Transverse colon (tissue), 4 donors: ENCODE measurements at regions of chr3 and their contacts with region 1.

Region 1: DNA sequence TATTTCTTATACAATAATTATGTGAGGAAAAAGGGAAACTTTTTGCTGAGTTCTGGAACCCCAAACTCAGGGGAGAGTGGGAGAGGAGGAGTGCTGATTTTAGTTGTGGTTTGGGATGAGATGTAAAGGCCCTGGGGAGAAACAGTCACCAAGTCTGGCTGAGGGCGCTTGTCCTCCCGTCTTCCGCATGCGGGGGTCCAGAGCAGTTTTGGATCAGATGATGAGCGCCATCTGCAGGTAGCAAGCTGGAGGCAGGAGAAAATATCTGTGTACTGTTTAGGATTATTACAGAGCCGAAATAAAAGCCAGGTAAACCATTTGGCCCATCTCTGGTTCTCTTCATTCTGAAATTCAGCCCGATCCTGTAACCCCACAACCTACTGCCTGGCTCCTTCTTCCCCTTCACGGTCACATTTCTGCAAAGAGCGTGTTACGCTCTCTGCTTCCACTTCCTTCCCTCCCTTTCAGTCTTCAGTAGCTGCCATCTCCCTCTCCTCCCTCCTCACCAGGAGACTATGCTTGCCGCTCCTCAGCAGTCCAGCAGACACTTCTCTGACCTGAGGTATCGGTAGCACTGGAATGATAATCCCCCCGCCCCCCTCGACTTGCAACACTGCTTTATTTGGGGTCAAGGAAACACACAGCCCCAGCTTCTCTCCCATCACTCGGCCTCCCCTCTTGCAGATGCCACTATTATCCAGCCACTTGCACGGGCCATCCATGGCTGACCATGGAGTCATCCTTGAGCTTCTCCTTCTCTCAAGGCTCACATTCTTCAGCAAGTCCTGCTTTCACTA is 1.4 kb upstream of the PARP14 start:
- DNase-seq: peak; percentile 87
- H3K4me3 ChIP-seq: peak overlapping the region in 3 of 4 donors; percentile 8 to 99 (median 22)
- H3K27ac ChIP-seq: peak overlapping the region; percentile 93 to 97 (median 94)
- H3K4me1 ChIP-seq: peaks cover 8 to 47% (median 16%) of the 10 kb centered on the region in 4 donors
- H3K27me3 ChIP-seq: no peaks in the 10 kb centered on the region
- CTCF ChIP-seq: peak; percentile 75 to 90 (median 83)
- EP300 ChIP-seq: no peak
- POLR2A ChIP-seq: no peak

Region 2: DNA sequence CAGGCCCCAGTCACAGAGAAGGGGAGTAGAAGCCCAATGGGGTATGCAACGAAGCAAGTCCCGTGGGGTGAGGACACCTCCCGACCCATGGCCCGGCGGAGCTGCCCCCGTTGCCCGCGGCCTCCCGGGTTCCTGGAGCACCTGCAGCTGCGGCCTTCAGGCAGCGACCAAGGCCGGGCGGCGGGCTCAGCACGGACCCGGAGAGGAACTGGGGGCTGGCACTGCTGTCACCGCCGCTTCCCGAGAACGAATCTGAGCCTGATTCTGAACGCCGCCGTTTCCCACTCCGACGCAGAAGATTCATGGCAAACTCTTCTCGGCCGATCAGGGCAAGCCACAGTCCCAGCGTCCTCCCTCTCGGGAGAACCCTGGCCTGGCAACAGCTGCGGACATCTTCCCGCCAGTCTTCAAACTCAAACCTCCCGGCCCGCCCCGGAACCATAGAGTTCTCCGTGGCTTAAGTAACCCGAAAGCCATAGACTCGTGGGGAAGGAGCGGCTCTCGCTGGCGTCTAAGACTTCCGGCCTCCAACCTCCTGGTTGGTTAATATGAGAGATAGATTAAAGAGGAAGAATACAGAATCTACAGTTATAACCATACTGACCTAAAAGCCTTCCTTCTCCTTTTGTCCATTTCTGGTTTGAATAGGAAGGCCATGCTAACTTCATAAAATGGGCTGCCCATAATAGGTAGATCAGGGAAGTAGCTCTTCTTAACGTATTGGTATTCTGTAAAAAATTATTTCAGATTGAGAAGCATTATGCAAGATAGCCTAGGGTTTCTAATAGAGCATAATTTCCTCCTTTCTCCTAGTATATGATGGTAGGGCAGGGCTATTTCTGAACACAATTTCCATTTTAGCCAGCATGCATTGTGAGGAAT is 1133.5 kb before region 1 on chr3 and contains the start of gene POLQ:
- in situ Hi-C with region 1: no loop called
- intact Hi-C with region 1: loop called (anchors 10 kb)
- DNase-seq: peak; percentile 92
- H3K4me3 ChIP-seq: peak within 1 kb of the TSS; percentile 28 to 68 (median 55)
- H3K27ac ChIP-seq: peak within 1 kb of the TSS; percentile 84 to 92 (median 87)
- H3K4me1 ChIP-seq: peaks cover 0 to 34% (median 17%) of the 10 kb centered on the region in 4 donors
- H3K27me3 ChIP-seq: no peaks in the 10 kb centered on the region
- CTCF ChIP-seq: no peak
- EP300 ChIP-seq: no peak
- POLR2A ChIP-seq: peak; percentile 26
- total RNA-seq, gene POLQ: under 0.01 to 25.1 (median 0.94) TPM

Region 3: GRCh38 chr3:122383771-122384697 is 295.2 kb before region 1 on chr3 and contains the start of gene FAM162A:
- in situ Hi-C with region 1: loop called in 2 of 4 experiments (anchors 10 to 25 kb)
- intact Hi-C with region 1: no loop called
- DNase-seq: peak; percentile 96
- H3K4me3 ChIP-seq: peak within 1 kb of the TSS; percentile 44 to 84 (median 62)
- H3K27ac ChIP-seq: peak within 1 kb of the TSS; percentile 88 to 95 (median 91)
- H3K4me1 ChIP-seq: peaks cover 0 to 45% (median 18%) of the 10 kb centered on the region in 4 donors
- H3K27me3 ChIP-seq: no peaks in the 10 kb centered on the region
- CTCF ChIP-seq: peak in 4 of 5 experiments; percentile 26 to 69 (median 47)
- EP300 ChIP-seq: no peak
- POLR2A ChIP-seq: peak; percentile 95
- total RNA-seq, gene FAM162A: 11.2 to 116 (median 57.6) TPM

Region 4: GRCh38 chr3:122392868-122393844 is 286.1 kb before region 1 on chr3:
- in situ Hi-C with region 1: loop called in 3 of 4 experiments (anchors 10 to 25 kb)
- intact Hi-C with region 1: loop called (anchors 5 kb)
- DNase-seq: no peak
- H3K4me3 ChIP-seq: no peak overlapping the region
- H3K27ac ChIP-seq: peak overlapping the region in 3 of 4 donors; percentile 0 to 23 (median 4)
- H3K4me1 ChIP-seq: peaks cover 4 to 18% (median 10%) of the 10 kb centered on the region in 4 donors
- H3K27me3 ChIP-seq: no peaks in the 10 kb centered on the region
- CTCF ChIP-seq: peak; percentile 62 to 79 (median 65)
- EP300 ChIP-seq: no peak
- POLR2A ChIP-seq: no peak

Region 5: GRCh38 chr3:122415720-122416654 is 263.3 kb before region 1 on chr3 and contains the start of gene WDR5B:
- in situ Hi-C with region 1: loop called in 1 of 4 experiments (anchors 25 kb)
- intact Hi-C with region 1: no loop called
- DNase-seq: peak; percentile 99
- H3K4me3 ChIP-seq: peak within 1 kb of the TSS; percentile 54 to 81 (median 67)
- H3K27ac ChIP-seq: peak within 1 kb of the TSS; percentile 86 to 92 (median 90)
- H3K4me1 ChIP-seq: peaks cover 7 to 36% (median 19%) of the 10 kb centered on the region in 4 donors
- H3K27me3 ChIP-seq: no peaks in the 10 kb centered on the region
- CTCF ChIP-seq: peak in 3 of 5 experiments; percentile 18 to 39 (median 23)
- EP300 ChIP-seq: no peak
- POLR2A ChIP-seq: peak; percentile 88
- total RNA-seq, gene WDR5B: 2.2 to 2.6 (median 2.5) TPM in 3 of 4 donors, not detected in the other

Region 6: GRCh38 chr3:122502139-122502538 is 177.1 kb before region 1 on chr3:
- in situ Hi-C with region 1: no loop called
- intact Hi-C with region 1: no loop called
- DNase-seq: no peak
- H3K4me3 ChIP-seq: no peak overlapping the region
- H3K27ac ChIP-seq: no peak overlapping the region
- H3K4me1 ChIP-seq: peaks cover 0 to 28% (median 2%) of the 10 kb centered on the region in 4 donors
- H3K27me3 ChIP-seq: no peaks in the 10 kb centered on the region
- CTCF ChIP-seq: no peak
- EP300 ChIP-seq: no peak
- POLR2A ChIP-seq: no peak

Region 7: DNA sequence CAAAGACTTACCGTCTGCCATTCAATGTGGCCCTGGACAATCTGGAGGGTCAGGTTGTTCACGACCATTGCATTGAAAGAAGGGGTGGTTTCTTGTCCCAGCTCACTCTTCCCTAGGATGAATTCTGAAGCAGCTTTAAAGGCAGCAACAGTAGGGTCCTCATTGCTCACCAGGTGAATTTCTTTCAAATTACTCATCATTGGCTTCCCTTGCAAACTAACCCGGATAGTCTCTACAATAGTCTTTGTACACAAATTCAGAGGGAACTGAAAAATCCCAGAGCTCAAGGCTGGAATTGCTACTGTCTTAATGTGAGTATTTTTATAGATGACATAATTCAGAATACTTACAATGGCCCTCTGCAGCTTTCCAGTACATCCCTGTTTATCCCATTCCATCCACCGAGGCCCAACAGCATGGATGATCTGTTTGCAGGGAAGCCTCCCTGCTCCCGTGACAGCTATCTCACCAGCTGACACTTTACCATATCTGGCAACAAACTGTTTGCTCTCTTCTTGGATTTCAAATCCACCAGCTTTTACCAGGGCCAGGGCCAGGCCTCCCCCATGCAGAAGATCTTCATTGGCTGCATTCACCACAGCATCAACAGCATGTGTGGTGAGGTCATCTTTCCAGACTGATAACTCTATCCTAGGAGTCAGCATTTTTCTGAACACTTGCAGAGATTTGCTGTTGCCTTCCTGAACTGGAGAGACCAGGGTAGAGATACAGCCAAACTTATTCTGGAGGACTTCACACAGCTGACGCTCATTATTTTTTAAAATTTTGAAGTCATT is 123.8 kb before region 1 on chr3:
- in situ Hi-C with region 1: loop called (anchors 5 to 10 kb)
- intact Hi-C with region 1: loop called (anchors 5 kb)
- DNase-seq: no peak
- H3K4me3 ChIP-seq: no peak overlapping the region
- H3K27ac ChIP-seq: peak overlapping the region in 3 of 4 donors; percentile 19 to 20 (median 19)
- H3K4me1 ChIP-seq: peaks cover 0 to 3% (median under 1%) of the 10 kb centered on the region in 4 donors
- H3K27me3 ChIP-seq: no peaks in the 10 kb centered on the region
- CTCF ChIP-seq: no peak
- EP300 ChIP-seq: no peak
- POLR2A ChIP-seq: no peak

Region 8: DNA sequence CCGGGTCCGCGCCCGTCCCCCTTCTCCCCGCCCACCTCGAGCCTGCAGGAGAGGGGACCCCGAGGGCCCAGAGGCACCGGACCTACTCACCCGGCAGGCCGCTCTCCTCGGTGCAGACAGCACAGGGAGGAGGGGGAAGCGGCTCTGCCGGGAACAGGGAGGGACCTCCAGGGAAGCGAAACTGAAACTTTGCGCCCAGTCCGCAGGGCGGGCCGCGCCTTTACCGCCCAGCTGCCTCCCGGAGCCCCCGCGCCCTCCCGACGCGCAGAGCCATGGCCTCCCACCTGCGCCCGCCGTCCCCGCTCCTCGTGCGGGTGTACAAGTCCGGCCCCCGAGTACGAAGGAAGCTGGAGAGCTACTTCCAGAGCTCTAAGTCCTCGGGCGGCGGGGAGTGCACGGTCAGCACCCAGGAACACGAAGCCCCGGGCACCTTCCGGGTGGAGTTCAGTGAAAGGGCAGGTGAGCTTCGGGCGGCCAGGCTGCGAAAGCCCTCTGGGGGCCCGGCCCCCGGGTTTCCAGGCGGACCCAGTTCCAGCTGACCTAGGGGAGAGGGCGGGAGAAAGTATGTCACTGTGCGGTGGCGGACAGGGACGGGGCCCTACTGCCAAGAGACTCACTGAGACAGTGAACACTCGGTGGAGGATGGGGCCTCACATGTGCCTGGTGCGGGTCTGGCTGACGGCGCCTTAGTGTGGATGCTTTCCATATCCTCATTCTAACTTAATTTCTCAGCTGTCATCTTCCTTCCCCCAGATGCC is 114.9 kb before region 1 on chr3 and contains the starts of genes DTX3L and PARP9:
- in situ Hi-C with region 1: loop called (anchors 5 to 10 kb)
- intact Hi-C with region 1: loop called (anchors 5 kb)
- DNase-seq: peak; percentile 90
- H3K4me3 ChIP-seq: peak within 1 kb of the TSS; percentile 68 to 92 (median 76)
- H3K27ac ChIP-seq: peak within 1 kb of the TSS; percentile 92 to 97 (median 92)
- H3K4me1 ChIP-seq: peaks cover 8 to 57% (median 25%) of the 10 kb centered on the region in 4 donors
- H3K27me3 ChIP-seq: no peaks in the 10 kb centered on the region
- CTCF ChIP-seq: no peak
- EP300 ChIP-seq: no peak
- POLR2A ChIP-seq: peak; percentile 86
- total RNA-seq, gene DTX3L: 22.3 to 32.4 (median 26.7) TPM
- total RNA-seq, gene PARP9: 24.2 to 35.8 (median 29.1) TPM

Region 9: GRCh38 chr3:123081718-123082369 is 402.6 kb after region 1 on chr3:
- in situ Hi-C with region 1: no loop called
- intact Hi-C with region 1: no loop called
- DNase-seq: no peak
- H3K4me3 ChIP-seq: no peak overlapping the region
- H3K27ac ChIP-seq: peak overlapping the region; percentile 44 to 64 (median 56)
- H3K4me1 ChIP-seq: peaks cover 38 to 71% (median 49%) of the 10 kb centered on the region in 4 donors
- H3K27me3 ChIP-seq: no peaks in the 10 kb centered on the region
- CTCF ChIP-seq: no peak
- EP300 ChIP-seq: no peak
- POLR2A ChIP-seq: no peak